ENCODE measurements at regions of chr3 and their contacts with region 1.

Region 1: DNA sequence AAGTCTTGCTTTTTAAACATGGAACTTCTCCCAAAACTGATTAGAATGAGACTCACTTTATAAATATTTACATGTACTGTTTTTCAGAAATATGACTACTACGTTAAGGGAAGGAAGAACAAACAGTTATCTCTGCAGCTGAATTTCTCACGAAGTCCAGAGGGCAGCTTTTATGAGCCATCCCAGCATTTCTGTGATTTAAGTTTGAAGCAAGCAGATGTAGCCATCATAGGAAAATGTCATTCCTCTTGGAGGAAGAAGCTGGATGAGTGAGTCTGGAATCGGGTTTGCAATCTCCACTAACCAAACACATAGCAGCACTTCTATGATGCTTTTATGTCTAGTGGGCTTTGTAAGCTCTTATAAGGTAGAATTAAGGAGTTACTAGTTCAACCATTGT is 53.7 kb downstream of the SCN11A start:
- DNase-seq: no peak
- H3K4me3 ChIP-seq: no peak overlapping the region
- H3K27ac ChIP-seq: no peak overlapping the region
- H3K4me1 ChIP-seq: no peaks in the 10 kb centered on the region
- CTCF ChIP-seq: no peak

Region 2: GRCh38 chr3:38521391-38521987 is 476.6 kb before region 1 on chr3:
- CTCF ChIA-PET with region 1: no interaction called
- POLR2A ChIA-PET with region 1: no interaction called
- intact Hi-C with region 1: loop called (anchors 5 kb)
- DNase-seq: peak; percentile 68
- H3K4me3 ChIP-seq: no peak overlapping the region
- H3K27ac ChIP-seq: no peak overlapping the region
- H3K4me1 ChIP-seq: no peaks in the 10 kb centered on the region
- CTCF ChIP-seq: peak; percentile 96

Region 3: DNA sequence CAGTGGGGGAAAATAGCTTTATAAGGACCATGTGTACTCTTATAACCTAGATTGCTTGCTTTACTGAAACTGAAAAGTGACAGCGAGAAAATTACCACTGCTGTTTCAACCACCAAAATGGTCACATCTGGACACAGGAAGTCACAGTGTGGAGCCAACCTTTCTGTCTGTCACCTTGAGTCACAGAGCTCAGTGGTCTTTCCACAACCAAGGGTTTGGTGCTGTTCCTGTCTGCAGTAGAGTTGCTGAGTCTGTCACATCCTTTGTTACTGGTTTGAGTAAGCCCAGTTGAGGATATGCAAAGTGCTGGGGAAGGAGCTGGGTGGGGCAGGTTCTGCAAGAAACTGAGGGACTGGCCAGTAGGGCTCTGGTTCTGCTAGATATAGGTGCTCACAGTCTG is 1172.3 kb after region 1 on chr3:
- CTCF ChIA-PET with region 1: no interaction called
- POLR2A ChIA-PET with region 1: no interaction called
- intact Hi-C with region 1: no loop called
- DNase-seq: no peak
- H3K4me3 ChIP-seq: no peak overlapping the region
- H3K27ac ChIP-seq: no peak overlapping the region
- H3K4me1 ChIP-seq: no peaks in the 10 kb centered on the region
- CTCF ChIP-seq: no peak

Measured in OCI-LY7 (cell line).